ENCODE measurements at regions of chr6 and their contacts with region 1.

Region 1: GRCh38 chr6:105087571-105088211 is 92.1 kb downstream of the POPDC3 start:
- DNase-seq: peak; percentile 21
- H3K4me3 Mint-ChIP-seq: no peak overlapping the region
- H3K27ac Mint-ChIP-seq: no peak overlapping the region
- H3K4me1 Mint-ChIP-seq: no peaks in the 10 kb centered on the region
- H3K27me3 Mint-ChIP-seq: peaks cover 7% of the 10 kb centered on the region

Region 2: GRCh38 chr6:105402939-105403935 is 315.5 kb after region 1 on chr6 and contains the start of gene PREP:
- CTCF ChIA-PET with region 1: interaction called, 14 read pairs
- POLR2A ChIA-PET with region 1: no interaction called
- DNase-seq: peak; percentile 88
- H3K4me3 Mint-ChIP-seq: peak within 1 kb of the TSS; percentile 92
- H3K27ac Mint-ChIP-seq: peak within 1 kb of the TSS; percentile 75
- H3K4me1 Mint-ChIP-seq: peaks cover 51% of the 10 kb centered on the region
- H3K27me3 Mint-ChIP-seq: peaks cover 10% of the 10 kb centered on the region
- total RNA-seq, gene PREP: 43.7 to 44.3 TPM

Region 3: DNA sequence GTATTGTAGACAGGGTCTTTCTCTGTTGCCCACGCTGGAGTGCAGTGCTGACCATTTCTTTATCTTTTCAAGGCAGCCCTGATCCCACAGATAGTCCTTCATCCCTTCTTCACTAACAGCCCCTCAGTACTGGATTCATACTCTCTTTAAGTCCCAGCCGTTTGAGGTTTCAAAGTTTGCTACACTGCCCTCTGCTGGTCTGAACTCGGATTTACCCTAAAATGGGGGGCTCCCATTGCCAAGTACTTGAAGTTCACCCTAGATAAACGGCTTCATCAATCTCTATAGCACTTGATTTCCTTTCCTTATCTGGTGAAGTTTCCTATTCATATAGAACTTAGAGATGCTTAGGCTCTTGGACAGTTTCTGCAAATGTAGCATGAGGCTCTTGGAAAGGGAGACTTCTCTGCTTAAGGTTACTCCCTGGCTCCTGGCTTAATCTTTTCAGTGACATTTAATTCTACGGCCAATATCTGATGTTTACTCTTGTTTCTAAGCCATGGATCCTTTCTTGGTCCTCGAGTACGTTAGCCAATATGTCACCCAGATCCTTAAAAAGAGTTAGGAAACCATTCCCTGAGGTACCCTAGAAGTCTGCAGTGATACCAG is 336.6 kb after region 1 on chr6:
- CTCF ChIA-PET with region 1: interaction called, 23 read pairs
- POLR2A ChIA-PET with region 1: no interaction called
- DNase-seq: peak; percentile 69
- H3K4me3 Mint-ChIP-seq: no peak overlapping the region
- H3K27ac Mint-ChIP-seq: no peak overlapping the region
- H3K4me1 Mint-ChIP-seq: peaks cover 3% of the 10 kb centered on the region
- H3K27me3 Mint-ChIP-seq: peaks cover 8% of the 10 kb centered on the region

Measured in activated CD4-positive, alpha-beta memory T cell treated with anti-CD3 and anti-CD28 coated beads, Interleukin-2, amount 10 ng/mL, durations not matched to agents 7 days and 5 days (primary cell).